SK-N-SH (cell line): ENCODE measurements at regions of chr10 and their contacts with region 1.

Region 1: GRCh38 chr10:16853201-16853600 is 36.0 kb upstream of the RSU1 start:
- DNase-seq: peak; percentile 38
- H3K4me3 ChIP-seq: no peak overlapping the region
- H3K27ac ChIP-seq: peak overlapping the region; percentile 50 to 58
- H3K4me1 ChIP-seq: peaks cover 22 to 38% of the 10 kb centered on the region in 2 experiments
- H3K27me3 ChIP-seq: no peaks in the 10 kb centered on the region
- CTCF ChIP-seq: peak; percentile 58
- EP300 ChIP-seq: no peak
- RAD21 ChIP-seq: peak; percentile 93

Region 2: GRCh38 chr10:16867556-16867955 is 14.4 kb after region 1 on chr10:
- CTCF ChIA-PET with region 1: interaction called, 16 read pairs
- POLR2A ChIA-PET with region 1: no interaction called
- DNase-seq: no peak
- H3K4me3 ChIP-seq: peak overlapping the region in 1 of 2 experiments; percentile 3; a peak in 1 of 4 replicates
- H3K27ac ChIP-seq: peak overlapping the region; percentile 96 to 97
- H3K4me1 ChIP-seq: peaks cover 29 to 30% of the 10 kb centered on the region in 2 experiments; a peak in 3 of 4 replicates
- H3K27me3 ChIP-seq: no peaks in the 10 kb centered on the region
- CTCF ChIP-seq: no peak
- EP300 ChIP-seq: peak; percentile 46 to 94; a peak in 3 of 4 replicates
- RAD21 ChIP-seq: no peak

Region 3: DNA sequence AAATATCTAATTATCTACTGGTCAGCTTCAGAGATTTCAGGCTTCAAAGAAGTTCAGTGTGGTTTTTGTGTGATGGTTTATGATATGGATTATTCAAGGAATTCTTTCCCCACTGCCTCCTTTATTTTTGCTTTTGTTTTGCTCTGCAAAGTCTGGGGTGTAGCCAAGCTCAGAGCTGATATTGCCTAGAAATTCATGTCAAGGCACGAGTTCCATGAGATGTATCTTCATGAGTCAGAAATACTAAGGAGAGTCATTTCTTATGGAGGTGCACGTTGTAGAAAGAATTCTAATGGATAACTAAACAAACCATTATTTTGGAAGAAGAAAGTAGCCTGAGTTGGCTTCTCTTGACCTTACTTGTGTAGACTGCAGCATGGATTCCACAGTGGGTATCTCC is 412.3 kb after region 1 on chr10:
- CTCF ChIA-PET with region 1: interaction called, 16 read pairs
- POLR2A ChIA-PET with region 1: no interaction called
- DNase-seq: no peak
- H3K4me3 ChIP-seq: no peak overlapping the region
- H3K27ac ChIP-seq: no peak overlapping the region
- H3K4me1 ChIP-seq: no peaks in the 10 kb centered on the region
- H3K27me3 ChIP-seq: no peaks in the 10 kb centered on the region; the same call in 1 of the 2 replicates
- CTCF ChIP-seq: no peak
- EP300 ChIP-seq: no peak
- RAD21 ChIP-seq: no peak